ENCODE measurements at regions of chr7 and their contacts with region 1.

Region 1: DNA sequence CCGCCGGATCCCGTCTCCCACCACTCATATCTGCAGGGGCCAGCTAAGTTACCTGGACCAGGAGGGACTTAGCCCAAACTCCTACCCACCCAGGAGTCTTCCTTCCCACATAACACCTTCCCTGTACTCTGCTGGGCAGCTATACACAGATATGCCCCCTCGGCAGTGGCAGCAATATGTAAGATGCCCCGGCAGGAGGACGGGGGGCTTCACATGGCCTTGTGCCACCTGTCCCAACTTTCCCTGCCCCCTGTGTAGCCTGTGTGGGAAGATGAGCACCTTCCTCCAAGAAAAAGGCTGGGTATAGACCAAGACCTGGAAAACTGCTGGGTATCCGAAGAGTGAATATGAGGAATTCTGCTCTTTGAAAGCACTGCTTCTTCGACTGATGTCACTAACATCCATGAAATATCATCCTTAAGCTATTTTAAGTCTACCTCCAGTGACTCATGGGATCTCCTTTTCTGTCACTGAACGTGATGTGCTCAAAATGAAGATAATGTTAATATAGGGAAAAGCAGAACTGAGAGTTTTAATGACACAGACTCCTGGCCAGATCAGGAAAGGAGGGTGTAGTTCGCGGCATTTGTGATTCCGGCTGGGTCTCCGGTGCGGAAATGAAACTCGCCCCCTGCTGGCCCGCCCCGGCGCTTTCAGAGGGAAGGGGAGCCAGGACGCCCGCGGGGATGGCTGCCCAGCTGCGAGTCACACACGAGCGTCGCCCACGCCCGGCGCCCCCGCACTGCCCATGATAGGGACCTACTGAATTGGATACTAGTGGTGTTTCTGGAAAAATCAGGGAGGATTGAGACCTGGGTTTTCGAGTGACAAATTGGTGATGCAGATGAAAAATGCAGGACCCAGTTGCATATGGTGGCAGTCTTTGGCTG is 256.9 kb upstream of the NFE2L3 start:
- DNase-seq: peak; percentile 81
- CTCF ChIP-seq: peak; percentile 57

Region 2: GRCh38 chr7:25420771-25421170 is 474.4 kb before region 1 on chr7:
- CTCF ChIA-PET with region 1: no interaction called
- POLR2A ChIA-PET with region 1: no interaction called
- DNase-seq: no peak
- CTCF ChIP-seq: no peak

Region 3: GRCh38 chr7:25908154-25908949 is 13.2 kb after region 1 on chr7:
- CTCF ChIA-PET with region 1: interaction called, 104 read pairs
- POLR2A ChIA-PET with region 1: no interaction called
- DNase-seq: no peak
- CTCF ChIP-seq: no peak

Region 4: DNA sequence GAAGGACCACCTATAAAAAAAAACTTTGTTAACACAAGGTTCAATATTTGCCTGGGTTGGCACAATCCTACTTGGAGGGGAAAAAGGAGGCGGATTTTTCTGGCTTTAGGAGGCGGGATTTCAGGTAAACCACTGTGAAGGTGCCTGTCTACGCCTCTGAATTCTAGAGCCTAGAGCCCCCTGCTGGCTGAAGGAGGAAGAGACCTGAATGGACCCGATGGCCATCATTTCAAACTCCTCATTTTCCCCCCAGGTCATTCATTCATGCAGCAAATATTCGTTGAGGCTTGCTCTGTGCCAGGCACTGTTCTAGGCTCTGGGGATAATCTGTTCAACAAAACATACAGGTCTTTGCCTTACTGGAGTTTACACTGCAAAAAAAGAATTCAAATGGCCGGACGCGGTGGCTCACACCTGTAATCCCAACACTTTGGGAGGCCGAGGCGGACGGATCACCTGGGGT is 166.6 kb after region 1 on chr7:
- CTCF ChIA-PET with region 1: interaction called, 84 read pairs
- POLR2A ChIA-PET with region 1: no interaction called
- DNase-seq: peak; percentile 74
- CTCF ChIP-seq: peak; percentile 80

Region 5: DNA sequence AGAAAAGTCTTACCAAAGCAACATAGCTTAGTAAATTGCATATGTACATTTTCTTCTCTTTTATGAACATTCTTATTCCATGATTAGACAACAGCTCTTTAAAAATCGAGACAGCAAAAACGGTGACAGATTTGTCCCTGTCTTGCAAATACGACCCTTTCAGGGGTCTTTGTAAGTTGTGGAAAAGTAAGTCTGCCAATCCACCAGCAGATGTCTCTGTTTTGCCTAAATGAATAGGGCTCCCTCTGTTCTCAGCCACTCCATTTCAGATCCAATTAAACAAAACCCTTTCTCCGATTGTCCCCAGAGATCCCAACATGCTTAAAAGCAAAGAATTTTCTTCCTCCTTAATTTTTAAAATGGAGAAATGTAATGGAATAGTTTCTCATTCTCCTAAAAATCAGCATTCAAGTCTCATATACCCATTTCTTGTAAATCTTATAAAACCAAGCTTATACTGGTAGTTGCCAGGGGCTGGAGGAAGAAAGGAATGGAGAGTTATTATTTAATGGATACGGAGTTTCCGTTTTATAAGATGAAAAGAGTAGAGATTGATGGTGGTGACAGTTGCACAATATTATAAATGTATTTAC is 195.9 kb after region 1 on chr7:
- CTCF ChIA-PET with region 1: interaction called, 57 read pairs
- POLR2A ChIA-PET with region 1: no interaction called
- DNase-seq: peak; percentile 54
- CTCF ChIP-seq: peak; percentile 47

Region 6: DNA sequence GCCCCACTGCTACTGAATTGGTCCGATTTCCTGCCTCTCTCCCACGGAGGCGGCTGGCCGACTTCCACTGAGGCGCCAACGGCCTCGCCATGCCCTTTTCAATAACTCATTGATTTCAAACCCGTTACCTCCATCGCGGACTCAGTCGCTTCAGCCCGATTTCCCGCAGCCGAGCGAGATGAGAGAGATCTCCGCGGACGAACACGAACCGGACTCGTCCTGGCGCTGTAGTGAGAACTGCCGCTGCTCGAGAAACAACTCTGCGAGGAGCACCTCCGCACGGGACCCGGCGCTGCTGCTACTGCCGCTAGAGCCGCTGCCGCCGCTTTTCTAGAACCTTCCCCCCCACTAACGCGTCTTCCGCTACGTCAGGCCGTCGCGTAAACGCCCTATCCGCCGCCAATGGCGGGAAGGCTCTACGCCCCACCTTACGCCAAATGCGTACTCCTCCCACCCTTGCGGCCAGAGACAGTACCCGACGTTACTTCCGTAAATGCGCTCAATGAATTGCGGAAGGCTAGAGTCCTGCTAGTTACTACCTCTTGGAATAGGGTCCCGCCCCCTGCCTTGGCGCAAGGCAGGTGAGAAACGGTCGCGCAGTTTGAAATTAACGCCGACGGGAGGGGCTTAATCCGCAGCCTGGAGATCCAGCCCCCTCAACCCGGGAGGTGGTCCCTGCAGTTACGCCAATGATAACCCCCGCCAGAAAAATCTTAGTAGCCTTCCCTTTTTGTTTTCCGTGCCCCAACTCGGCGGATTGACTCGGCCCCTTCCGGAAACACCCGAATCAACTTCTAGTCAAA is 305.5 kb after region 1 on chr7 and contains the start of gene HNRNPA2B1:
- CTCF ChIA-PET with region 1: interaction called, 17 read pairs
- POLR2A ChIA-PET with region 1: interaction called, 7 read pairs
- DNase-seq: peak; percentile 80
- CTCF ChIP-seq: no peak

Measured in GM10248 (cell line).